A673 (cell line): ENCODE measurements at regions of chr22 and their contacts with region 1.

Region 1: DNA sequence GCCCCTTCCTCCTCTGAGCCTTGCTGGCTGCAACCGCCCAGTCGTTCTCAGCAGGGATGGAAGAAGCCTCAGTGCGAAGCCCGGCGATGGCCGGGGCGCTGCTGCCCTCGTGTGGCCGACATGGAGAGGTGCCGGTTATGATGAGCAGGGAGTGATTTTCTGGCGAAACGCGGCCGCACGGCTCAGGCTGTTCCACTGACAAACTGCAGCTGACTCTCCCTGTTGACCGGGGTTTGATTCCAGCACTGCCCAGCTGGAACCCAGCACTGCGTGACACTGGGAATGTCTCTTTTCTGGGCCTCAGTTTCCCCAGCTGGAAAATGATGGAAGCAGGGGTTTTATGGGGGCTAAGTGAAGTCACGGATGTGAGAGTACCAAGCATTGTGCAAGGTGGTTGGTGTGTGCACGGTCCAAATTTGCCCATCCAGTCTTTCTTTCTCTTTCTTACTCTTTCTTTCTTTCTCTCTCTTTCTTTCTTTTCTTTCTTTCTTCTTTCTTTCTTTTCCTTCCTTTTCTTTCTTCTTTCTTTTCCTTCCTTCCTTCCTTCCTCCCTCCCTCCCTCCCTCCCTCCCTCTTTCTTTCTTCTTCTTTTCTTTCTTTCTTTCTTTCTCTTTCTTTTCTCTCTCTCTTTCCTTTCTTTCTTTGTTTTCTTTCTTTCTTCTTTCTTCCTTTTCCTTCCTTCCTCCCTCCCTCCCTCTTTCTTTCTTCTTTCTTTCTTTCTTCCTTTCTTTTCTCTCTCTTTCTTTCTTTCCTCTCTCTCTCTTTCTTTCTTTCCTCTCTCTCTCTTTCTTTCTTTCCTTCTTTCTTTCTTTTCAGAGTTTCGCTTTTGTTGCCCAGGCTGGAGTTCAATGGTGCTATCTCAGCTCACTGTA is 25.8 kb upstream of the MPPED1 start:
- DNase-seq: peak; percentile 83
- H3K4me3 ChIP-seq: no peak overlapping the region
- H3K27ac ChIP-seq: no peak overlapping the region
- H3K4me1 ChIP-seq: no peaks in the 10 kb centered on the region
- H3K27me3 ChIP-seq: peaks cover 29% of the 10 kb centered on the region
- CTCF ChIP-seq: peak; percentile 95

Region 2: DNA sequence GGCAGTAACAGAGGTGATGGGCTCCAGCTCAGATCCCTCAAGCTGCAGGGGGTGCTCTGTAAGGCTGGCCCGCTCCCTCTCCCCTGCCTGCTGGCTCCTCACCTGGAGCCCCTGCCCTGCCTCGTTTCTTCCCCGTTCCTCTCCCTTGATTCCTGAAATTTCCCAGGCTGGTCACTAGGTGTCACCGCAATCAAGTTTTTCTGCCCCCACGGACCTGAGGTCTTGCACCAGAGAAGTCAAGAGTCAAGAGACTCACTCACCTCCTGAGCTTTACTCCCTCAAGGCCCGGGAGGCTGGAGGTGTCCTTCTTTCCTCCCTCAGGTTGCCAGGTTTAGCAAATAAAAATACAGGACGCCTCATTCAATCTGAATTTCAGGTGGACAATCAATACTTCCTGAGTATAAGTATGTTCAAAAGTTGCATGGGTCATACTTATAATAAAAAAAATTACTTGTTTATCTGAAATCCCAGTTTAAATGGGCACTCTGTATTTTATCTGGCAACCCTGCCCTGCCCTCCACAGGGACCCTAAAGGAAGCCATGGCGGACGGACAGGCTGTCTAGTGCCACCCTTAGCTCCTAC is 112.0 kb before region 1 on chr22:
- CTCF ChIA-PET with region 1: interaction called, 6 read pairs
- POLR2A ChIA-PET with region 1: no interaction called
- intact Hi-C with region 1: loop called (anchors 1 kb)
- DNase-seq: peak; percentile 54
- H3K4me3 ChIP-seq: no peak overlapping the region
- H3K27ac ChIP-seq: no peak overlapping the region
- H3K4me1 ChIP-seq: no peaks in the 10 kb centered on the region
- H3K27me3 ChIP-seq: no peaks in the 10 kb centered on the region
- CTCF ChIP-seq: peak; percentile 82

Region 3: DNA sequence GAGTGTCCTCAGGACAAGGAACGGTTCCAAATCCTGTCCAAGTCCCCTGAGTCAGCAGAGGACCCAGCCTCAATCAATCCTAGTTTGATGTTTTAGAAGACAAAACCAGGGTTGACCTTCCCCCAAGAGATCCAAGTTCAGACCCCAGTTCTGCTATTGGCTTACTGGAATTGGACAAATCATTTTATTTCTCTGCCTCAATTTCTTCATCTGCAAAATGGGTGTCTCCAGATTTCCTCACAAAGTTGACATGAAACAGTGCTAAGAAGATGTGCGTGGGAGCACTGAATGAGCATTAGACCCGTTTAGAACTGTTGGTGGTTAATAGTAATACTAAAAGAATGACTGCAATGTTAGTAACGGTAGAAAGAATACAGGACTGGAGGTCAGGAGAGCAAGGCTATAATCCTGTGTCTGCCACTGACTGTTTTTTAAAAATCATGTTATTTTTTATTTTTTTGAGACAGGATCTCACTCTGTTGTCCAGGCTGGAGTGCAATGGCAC is 10.0 kb before region 1 on chr22:
- CTCF ChIA-PET with region 1: no interaction called
- POLR2A ChIA-PET with region 1: no interaction called
- intact Hi-C with region 1: no loop called
- DNase-seq: no peak
- H3K4me3 ChIP-seq: no peak overlapping the region
- H3K27ac ChIP-seq: no peak overlapping the region
- H3K4me1 ChIP-seq: no peaks in the 10 kb centered on the region
- H3K27me3 ChIP-seq: peaks cover 34% of the 10 kb centered on the region
- CTCF ChIP-seq: no peak

Region 4: DNA sequence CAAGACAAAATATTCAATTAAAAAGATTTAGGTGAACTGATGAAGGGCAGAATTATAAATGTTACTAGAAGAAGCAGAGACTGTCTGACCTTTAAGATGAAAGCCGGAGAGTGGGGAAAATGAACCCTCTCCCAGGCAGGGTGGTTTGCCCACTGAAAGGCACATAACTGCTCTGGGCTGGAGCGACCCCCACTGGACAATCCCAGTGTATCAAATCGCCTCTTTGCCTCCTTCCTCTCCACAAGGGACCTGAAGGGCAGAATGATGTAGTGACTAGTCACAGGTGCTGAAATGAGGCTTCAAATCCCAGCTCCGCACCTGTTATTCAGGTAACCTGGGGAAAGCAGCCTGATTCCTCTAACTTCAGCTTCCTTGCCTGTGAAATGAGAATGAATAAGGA is 357.1 kb after region 1 on chr22:
- CTCF ChIA-PET with region 1: no interaction called
- POLR2A ChIA-PET with region 1: no interaction called
- intact Hi-C with region 1: loop called (anchors 5 kb)
- DNase-seq: peak; percentile 19
- H3K4me3 ChIP-seq: no peak overlapping the region
- H3K27ac ChIP-seq: no peak overlapping the region
- H3K4me1 ChIP-seq: peaks cover 16% of the 10 kb centered on the region
- H3K27me3 ChIP-seq: peaks cover 63% of the 10 kb centered on the region
- CTCF ChIP-seq: peak; percentile 55

Region 5: DNA sequence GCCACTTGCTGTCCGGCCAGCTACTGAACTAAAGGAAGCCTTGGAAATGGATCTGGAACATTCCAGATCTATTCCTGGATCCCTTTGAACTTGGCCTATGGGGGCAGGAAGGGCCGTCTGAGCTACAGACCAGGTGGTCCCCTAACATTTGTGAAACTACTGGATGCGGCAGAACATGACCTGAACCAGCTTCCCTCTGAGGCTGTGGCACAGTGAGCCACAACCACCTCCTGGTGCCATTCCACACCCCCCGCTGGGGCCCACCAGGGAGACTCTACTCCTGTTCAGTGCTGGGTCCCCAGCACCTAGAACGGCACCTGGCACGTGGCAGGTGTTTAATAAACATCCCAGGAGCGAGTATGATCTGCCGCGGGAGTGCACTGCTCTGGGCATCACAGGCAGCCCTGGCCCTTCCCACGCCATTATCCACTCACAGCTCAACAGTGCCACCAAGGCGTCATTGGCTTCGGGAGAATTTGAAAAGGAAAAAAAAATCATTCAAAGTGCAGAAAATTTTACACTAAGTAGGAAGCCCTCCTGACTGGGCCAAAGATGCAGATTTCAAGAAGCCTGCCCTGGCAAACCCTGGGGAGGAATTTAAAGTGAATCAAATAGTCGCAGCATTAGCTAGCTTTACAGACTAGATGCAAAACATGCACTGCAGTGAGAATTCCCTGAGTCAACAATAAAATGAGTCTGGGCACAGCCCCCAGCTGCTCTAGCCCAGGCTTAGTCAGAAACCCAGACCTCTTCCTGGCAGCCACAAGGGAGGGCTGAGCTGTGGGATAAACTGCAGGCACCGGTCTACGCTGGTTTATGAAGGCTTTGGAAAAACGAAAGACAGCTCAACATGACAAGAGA is 440.4 kb after region 1 on chr22:
- CTCF ChIA-PET with region 1: no interaction called
- POLR2A ChIA-PET with region 1: no interaction called
- intact Hi-C with region 1: loop called (anchors 2 kb)
- DNase-seq: peak; percentile 52
- H3K4me3 ChIP-seq: no peak overlapping the region
- H3K27ac ChIP-seq: no peak overlapping the region
- H3K4me1 ChIP-seq: no peaks in the 10 kb centered on the region
- H3K27me3 ChIP-seq: no peaks in the 10 kb centered on the region
- CTCF ChIP-seq: peak; percentile 56